ENCODE measurements at regions of chr10 and their contacts with region 1.

Region 1: GRCh38 chr10:20004087-20004523 is 187.9 kb downstream of the PLXDC2 start:
- DNase-seq: no peak
- ATAC-seq: peak; percentile 28
- H3K4me3 Mint-ChIP-seq: no peak overlapping the region
- H3K27ac Mint-ChIP-seq: peak overlapping the region; percentile 73
- H3K4me1 Mint-ChIP-seq: peaks cover 11% of the 10 kb centered on the region
- H3K27me3 Mint-ChIP-seq: no peaks in the 10 kb centered on the region
- CTCF ChIP-seq: no peak

Region 2: DNA sequence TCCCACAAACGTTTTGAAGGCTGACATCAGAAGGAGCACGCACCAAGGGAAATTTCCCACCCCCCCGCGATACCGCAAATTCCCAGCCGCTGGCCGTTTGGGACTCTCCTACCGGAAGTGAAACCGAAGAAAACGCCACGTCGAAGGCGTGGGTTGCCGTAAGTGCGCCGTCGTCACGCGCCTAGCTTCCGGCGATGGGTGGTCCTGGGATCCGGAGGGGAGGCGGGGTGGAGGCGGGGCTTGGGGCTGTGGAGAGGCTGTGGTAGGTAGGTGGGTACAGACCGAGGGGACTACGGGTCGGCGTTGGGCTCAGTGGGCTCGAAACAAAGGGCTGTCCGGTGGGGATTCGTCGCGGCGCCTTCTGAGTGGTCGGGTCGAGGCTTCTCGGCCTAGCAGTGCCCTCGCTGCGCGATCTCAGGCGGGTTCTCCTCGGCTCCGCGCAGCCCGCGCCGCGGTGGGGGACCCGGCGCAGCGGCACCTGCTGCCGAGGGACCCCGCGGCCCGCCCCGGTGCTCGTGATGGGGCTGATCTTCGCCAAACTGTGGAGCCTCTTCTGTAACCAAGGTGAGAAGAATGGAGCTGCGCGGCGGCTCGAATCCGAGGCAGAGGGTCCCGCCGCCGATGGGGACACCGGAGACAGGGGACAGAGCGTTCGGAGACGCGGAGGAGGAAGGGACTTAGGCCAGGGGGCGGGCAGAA is 1344.8 kb before region 1 on chr10 and contains the start of gene ARL5B:
- CTCF ChIA-PET with region 1: no interaction called
- POLR2A ChIA-PET with region 1: no interaction called
- intact Hi-C with region 1: loop called (anchors 10 kb)
- DNase-seq: peak; percentile 94
- ATAC-seq: peak; percentile 97
- H3K4me3 Mint-ChIP-seq: peak within 1 kb of the TSS; percentile 98
- H3K27ac Mint-ChIP-seq: peak within 1 kb of the TSS; percentile 97
- H3K4me1 Mint-ChIP-seq: peaks cover 41% of the 10 kb centered on the region
- H3K27me3 Mint-ChIP-seq: no peaks in the 10 kb centered on the region
- CTCF ChIP-seq: no peak
- total RNA-seq, gene ARL5B: 9.4 and 10.6 TPM in 2 replicates

Region 3: GRCh38 chr10:19819419-19820033 is 184.6 kb before region 1 on chr10:
- CTCF ChIA-PET with region 1: no interaction called
- POLR2A ChIA-PET with region 1: no interaction called
- intact Hi-C with region 1: loop called (anchors 10 kb)
- DNase-seq: no peak
- ATAC-seq: no peak
- H3K4me3 Mint-ChIP-seq: no peak overlapping the region
- H3K27ac Mint-ChIP-seq: no peak overlapping the region
- H3K4me1 Mint-ChIP-seq: peaks cover 20% of the 10 kb centered on the region
- H3K27me3 Mint-ChIP-seq: peaks cover 23% of the 10 kb centered on the region
- CTCF ChIP-seq: no peak

Region 4: GRCh38 chr10:19947656-19948055 is 56.4 kb before region 1 on chr10:
- CTCF ChIA-PET with region 1: no interaction called
- POLR2A ChIA-PET with region 1: no interaction called
- intact Hi-C with region 1: loop called (anchors 2 kb)
- DNase-seq: no peak
- ATAC-seq: no peak
- H3K4me3 Mint-ChIP-seq: no peak overlapping the region
- H3K27ac Mint-ChIP-seq: no peak overlapping the region
- H3K4me1 Mint-ChIP-seq: peaks cover 12% of the 10 kb centered on the region
- H3K27me3 Mint-ChIP-seq: no peaks in the 10 kb centered on the region
- CTCF ChIP-seq: no peak

Region 5: GRCh38 chr10:20630092-20630643 is 626.1 kb after region 1 on chr10:
- CTCF ChIA-PET with region 1: no interaction called
- POLR2A ChIA-PET with region 1: no interaction called
- intact Hi-C with region 1: no loop called
- DNase-seq: no peak
- ATAC-seq: no peak
- H3K4me3 Mint-ChIP-seq: no peak overlapping the region
- H3K27ac Mint-ChIP-seq: no peak overlapping the region
- H3K4me1 Mint-ChIP-seq: no peaks in the 10 kb centered on the region
- H3K27me3 Mint-ChIP-seq: no peaks in the 10 kb centered on the region
- CTCF ChIP-seq: no peak

Measured in activated B cell treated with CpG ODN at 0.5 μM for 24 hours (primary cell).